ENCODE measurements at regions of chr14 and their contacts with region 1.

Region 1: DNA sequence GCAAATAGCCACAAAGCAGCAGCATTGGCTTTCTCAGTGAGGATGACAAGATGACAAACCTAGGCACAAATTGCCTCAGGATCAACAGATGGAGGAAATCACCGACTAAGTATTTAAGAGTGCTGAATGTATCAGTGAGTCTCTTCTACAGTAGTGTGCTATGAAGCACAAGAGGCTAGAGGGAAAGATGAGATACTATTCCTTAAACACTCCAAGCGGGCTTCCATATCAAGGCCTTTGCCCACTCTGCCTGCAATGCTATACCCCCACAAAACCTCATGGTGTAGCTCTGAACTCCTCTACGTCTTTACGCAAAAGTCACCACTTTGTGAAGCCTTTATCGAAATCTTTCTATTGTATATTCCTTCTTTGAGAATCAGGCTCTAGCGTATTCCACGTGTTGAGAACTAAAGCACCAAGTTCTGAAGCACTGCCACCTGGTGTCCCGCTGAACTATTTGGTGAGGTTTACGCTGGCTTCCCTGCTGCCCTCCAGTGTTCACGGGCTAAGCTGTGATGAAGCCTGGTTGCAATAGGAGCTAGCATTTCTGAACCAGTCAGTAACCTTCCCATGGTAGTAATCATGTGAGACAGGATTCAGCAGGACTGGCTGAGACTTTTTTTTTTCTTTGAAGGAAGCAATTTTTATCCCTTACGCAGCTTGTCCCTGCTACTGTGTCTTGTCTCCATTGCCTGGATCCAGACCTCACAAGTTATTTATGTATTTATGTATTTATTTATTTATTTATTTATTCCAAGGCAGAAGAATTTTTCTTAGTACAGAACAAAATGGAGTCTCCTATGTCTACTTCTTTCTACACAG is 426.5 kb upstream of the OR4E1 start:
- DNase-seq: peak; percentile 33 to 81
- ATAC-seq: peak; percentile 67 to 93 (median 90)
- H3K4me3 ChIP-seq: no peak overlapping the region
- H3K4me3 Mint-ChIP-seq: no peak overlapping the region
- H3K27ac ChIP-seq: no peak overlapping the region
- H3K27ac Mint-ChIP-seq: no peak overlapping the region
- H3K4me1 ChIP-seq: peaks cover 3% of the 10 kb centered on the region
- H3K4me1 Mint-ChIP-seq: peaks cover 19 to 23% of the 10 kb centered on the region in 2 donors
- H3K27me3 ChIP-seq: no peaks in the 10 kb centered on the region
- H3K27me3 Mint-ChIP-seq: peaks cover 6 to 8% of the 10 kb centered on the region in 2 donors
- CTCF ChIP-seq: peak; percentile 58

Region 2: GRCh38 chr14:22047115-22047514 is 53.0 kb before region 1 on chr14:
- intact Hi-C with region 1: loop called (anchors 1 kb)
- DNase-seq: peak in 1 of 2 donors; percentile 76
- ATAC-seq: peak; percentile 73 to 88 (median 78)
- H3K4me3 ChIP-seq: no peak overlapping the region
- H3K4me3 Mint-ChIP-seq: no peak overlapping the region
- H3K27ac ChIP-seq: no peak overlapping the region
- H3K27ac Mint-ChIP-seq: no peak overlapping the region
- H3K4me1 ChIP-seq: no peaks in the 10 kb centered on the region
- H3K4me1 Mint-ChIP-seq: peaks cover 11 to 12% of the 10 kb centered on the region in 2 donors
- H3K27me3 ChIP-seq: no peaks in the 10 kb centered on the region
- H3K27me3 Mint-ChIP-seq: peaks cover 12 to 32% of the 10 kb centered on the region in 2 donors
- CTCF ChIP-seq: peak; percentile 38

Measured in natural killer cell (primary cell).